B cell (primary cell): ENCODE measurements at regions of chr3 and their contacts with region 1.

Region 1: DNA sequence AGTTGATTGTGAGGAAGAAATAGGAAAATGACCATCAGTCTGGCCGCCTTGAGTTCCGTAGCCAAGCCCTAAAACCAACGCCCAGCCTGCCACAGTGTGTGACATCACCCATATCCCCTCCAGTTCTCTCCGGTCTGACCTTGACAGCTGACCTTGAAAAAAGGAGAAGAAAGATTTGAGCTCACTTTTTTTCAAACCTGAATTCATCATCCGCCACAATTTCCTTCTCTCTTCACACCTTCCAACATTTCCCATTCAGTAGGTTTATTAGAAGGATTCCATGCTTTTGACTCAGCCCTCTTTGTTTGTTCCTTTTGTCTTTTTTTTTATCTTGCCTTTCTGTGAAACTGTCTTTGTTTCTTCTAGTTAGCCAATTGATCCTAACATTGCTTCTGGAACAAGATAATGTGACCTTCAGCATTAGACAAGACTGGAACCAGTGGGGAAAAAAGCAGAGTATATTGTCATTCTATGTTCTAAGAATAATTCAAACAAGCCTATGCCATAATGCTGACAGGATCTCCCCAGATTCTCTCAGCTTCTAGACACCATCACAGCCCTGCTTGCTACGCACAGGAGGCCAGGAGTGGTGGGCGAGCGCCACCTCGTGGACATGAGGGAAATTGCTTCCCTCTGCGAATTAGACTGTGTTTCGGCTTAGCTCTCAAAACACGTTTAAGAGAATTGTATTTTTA is 283.1 kb downstream of the FGF12 start:
- DNase-seq: peak; percentile 62
- ATAC-seq: peak; percentile 61
- H3K4me3 ChIP-seq: no peak overlapping the region
- H3K4me3 Mint-ChIP-seq: no peak overlapping the region
- H3K27ac ChIP-seq: no peak overlapping the region
- H3K27ac Mint-ChIP-seq: no peak overlapping the region
- H3K4me1 ChIP-seq: no peaks in the 10 kb centered on the region
- H3K4me1 Mint-ChIP-seq: peaks cover 4% of the 10 kb centered on the region
- H3K27me3 ChIP-seq: peaks cover 0 to 9% (median 2%) of the 10 kb centered on the region in 4 experiments
- H3K27me3 Mint-ChIP-seq: peaks cover 35% of the 10 kb centered on the region
- CTCF ChIP-seq: peak; percentile 99

Region 2: GRCh38 chr3:190883973-190884832 is 1560.0 kb before region 1 on chr3:
- CTCF ChIA-PET with region 1: interaction called, 48 read pairs
- POLR2A ChIA-PET with region 1: no interaction called
- intact Hi-C with region 1: no loop called
- DNase-seq: peak; percentile 51
- ATAC-seq: peak; percentile 41
- H3K4me3 ChIP-seq: no peak overlapping the region
- H3K4me3 Mint-ChIP-seq: no peak overlapping the region
- H3K27ac ChIP-seq: no peak overlapping the region
- H3K27ac Mint-ChIP-seq: no peak overlapping the region
- H3K4me1 ChIP-seq: no peaks in the 10 kb centered on the region
- H3K4me1 Mint-ChIP-seq: no peaks in the 10 kb centered on the region
- H3K27me3 ChIP-seq: no peaks in the 10 kb centered on the region
- H3K27me3 Mint-ChIP-seq: peaks cover 10% of the 10 kb centered on the region
- CTCF ChIP-seq: peak; percentile 98

Region 3: DNA sequence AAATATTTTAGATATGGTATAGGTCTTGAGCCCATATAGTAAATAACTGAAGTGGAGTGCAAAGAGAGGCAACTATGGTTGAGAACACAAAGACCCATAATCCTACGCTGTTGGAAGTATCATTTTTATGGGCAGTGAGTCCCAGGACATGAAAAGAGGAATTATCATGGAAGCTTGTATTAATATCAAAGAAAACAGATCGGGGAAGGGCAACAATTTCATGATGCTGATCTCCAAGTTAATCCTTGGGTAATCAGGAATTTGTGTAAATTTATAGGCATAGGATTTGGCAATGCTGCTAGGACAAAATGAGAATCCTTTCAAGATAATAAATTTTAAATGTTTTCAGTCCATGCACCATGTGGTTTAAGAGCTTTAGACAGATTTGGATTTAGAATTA is 1023.5 kb before region 1 on chr3:
- CTCF ChIA-PET with region 1: interaction called, 13 read pairs
- POLR2A ChIA-PET with region 1: no interaction called
- intact Hi-C with region 1: no loop called
- DNase-seq: no peak
- ATAC-seq: no peak
- H3K4me3 ChIP-seq: no peak overlapping the region
- H3K4me3 Mint-ChIP-seq: no peak overlapping the region
- H3K27ac ChIP-seq: no peak overlapping the region
- H3K27ac Mint-ChIP-seq: no peak overlapping the region
- H3K4me1 ChIP-seq: no peaks in the 10 kb centered on the region
- H3K4me1 Mint-ChIP-seq: peaks cover 4% of the 10 kb centered on the region
- H3K27me3 ChIP-seq: no peaks in the 10 kb centered on the region
- H3K27me3 Mint-ChIP-seq: peaks cover 28% of the 10 kb centered on the region
- CTCF ChIP-seq: no peak

Region 4: GRCh38 chr3:192423003-192423349 is 21.3 kb before region 1 on chr3:
- CTCF ChIA-PET with region 1: interaction called, 10 read pairs
- POLR2A ChIA-PET with region 1: no interaction called
- intact Hi-C with region 1: no loop called
- DNase-seq: no peak
- ATAC-seq: no peak
- H3K4me3 ChIP-seq: no peak overlapping the region
- H3K4me3 Mint-ChIP-seq: no peak overlapping the region
- H3K27ac ChIP-seq: no peak overlapping the region
- H3K27ac Mint-ChIP-seq: no peak overlapping the region
- H3K4me1 ChIP-seq: no peaks in the 10 kb centered on the region
- H3K4me1 Mint-ChIP-seq: no peaks in the 10 kb centered on the region
- H3K27me3 ChIP-seq: peaks cover 0 to 3% (median 0%) of the 10 kb centered on the region in 4 experiments
- H3K27me3 Mint-ChIP-seq: peaks cover 10% of the 10 kb centered on the region
- CTCF ChIP-seq: no peak